OCI-LY7 (cell line): ENCODE measurements at regions of chr20 and their contacts with region 1.

Region 1: GRCh38 chr20:37384683-37385174 is 38.8 kb downstream of the SRC start:
- DNase-seq: peak; percentile 74
- H3K4me3 ChIP-seq: peak overlapping the region; percentile 53
- H3K27ac ChIP-seq: no peak overlapping the region
- H3K4me1 ChIP-seq: peaks cover 25% of the 10 kb centered on the region
- CTCF ChIP-seq: peak; percentile 83

Region 2: GRCh38 chr20:37270576-37271420 is 113.9 kb before region 1 on chr20:
- CTCF ChIA-PET with region 1: interaction called, 4 read pairs
- POLR2A ChIA-PET with region 1: no interaction called
- intact Hi-C with region 1: loop called (anchors 1 kb)
- DNase-seq: no peak
- H3K4me3 ChIP-seq: no peak overlapping the region
- H3K27ac ChIP-seq: no peak overlapping the region
- H3K4me1 ChIP-seq: peaks cover 51% of the 10 kb centered on the region
- CTCF ChIP-seq: no peak

Region 3: GRCh38 chr20:37316116-37316774 is 68.5 kb before region 1 on chr20:
- CTCF ChIA-PET with region 1: no interaction called
- POLR2A ChIA-PET with region 1: no interaction called
- intact Hi-C with region 1: loop called (anchors 5 kb)
- DNase-seq: peak; percentile 76
- H3K4me3 ChIP-seq: peak overlapping the region; percentile 40
- H3K27ac ChIP-seq: peak overlapping the region; percentile 81
- H3K4me1 ChIP-seq: peaks cover 39% of the 10 kb centered on the region
- CTCF ChIP-seq: no peak

Region 4: DNA sequence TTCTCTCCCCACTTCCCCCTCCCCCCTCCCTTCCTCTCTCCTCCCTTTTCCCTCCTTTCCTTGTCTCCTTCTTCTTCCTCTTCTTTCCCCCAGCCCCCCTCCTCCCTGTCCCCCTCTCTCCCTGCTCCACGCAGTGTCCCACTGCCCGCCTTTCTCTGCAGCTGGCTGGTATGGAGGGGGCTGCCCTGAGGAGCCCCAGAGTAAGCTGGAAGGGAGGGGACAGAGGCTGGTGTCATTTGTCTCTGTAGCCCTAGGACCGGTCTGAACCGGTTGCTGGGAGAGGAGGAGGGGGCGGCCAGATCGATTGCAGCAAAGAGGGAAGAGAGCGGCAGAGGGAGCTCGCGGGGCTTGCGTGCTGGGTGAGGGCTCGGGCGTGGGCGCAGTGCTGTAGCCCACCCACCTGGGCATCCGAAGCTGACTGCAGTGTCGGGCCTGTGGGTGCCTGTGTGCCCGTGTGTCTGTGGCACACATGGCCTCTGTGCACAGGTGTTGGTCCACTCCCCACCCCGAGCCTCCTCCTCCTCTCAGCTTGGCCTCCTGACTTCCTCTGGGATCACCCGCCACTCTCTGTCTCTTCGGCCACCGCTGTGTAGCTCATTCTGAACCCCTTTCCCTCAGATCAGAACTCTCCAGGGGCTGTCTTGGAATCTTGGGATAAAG is 11.8 kb after region 1 on chr20:
- CTCF ChIA-PET with region 1: no interaction called
- POLR2A ChIA-PET with region 1: no interaction called
- intact Hi-C with region 1: no loop called
- DNase-seq: no peak
- H3K4me3 ChIP-seq: no peak overlapping the region
- H3K27ac ChIP-seq: no peak overlapping the region
- H3K4me1 ChIP-seq: no peaks in the 10 kb centered on the region
- CTCF ChIP-seq: no peak

Region 5: GRCh38 chr20:37534401-37535157 is 149.8 kb after region 1 on chr20:
- CTCF ChIA-PET with region 1: no interaction called
- POLR2A ChIA-PET with region 1: no interaction called
- intact Hi-C with region 1: loop called (anchors 2 kb)
- DNase-seq: peak; percentile 80
- H3K4me3 ChIP-seq: no peak overlapping the region
- H3K27ac ChIP-seq: no peak overlapping the region
- H3K4me1 ChIP-seq: peaks cover 8% of the 10 kb centered on the region
- CTCF ChIP-seq: peak; percentile 94

Region 6: GRCh38 chr20:37598100-37598543 is 213.4 kb after region 1 on chr20:
- CTCF ChIA-PET with region 1: no interaction called
- POLR2A ChIA-PET with region 1: no interaction called
- intact Hi-C with region 1: no loop called
- DNase-seq: no peak
- H3K4me3 ChIP-seq: no peak overlapping the region
- H3K27ac ChIP-seq: no peak overlapping the region
- H3K4me1 ChIP-seq: no peaks in the 10 kb centered on the region
- CTCF ChIP-seq: no peak

Region 7: DNA sequence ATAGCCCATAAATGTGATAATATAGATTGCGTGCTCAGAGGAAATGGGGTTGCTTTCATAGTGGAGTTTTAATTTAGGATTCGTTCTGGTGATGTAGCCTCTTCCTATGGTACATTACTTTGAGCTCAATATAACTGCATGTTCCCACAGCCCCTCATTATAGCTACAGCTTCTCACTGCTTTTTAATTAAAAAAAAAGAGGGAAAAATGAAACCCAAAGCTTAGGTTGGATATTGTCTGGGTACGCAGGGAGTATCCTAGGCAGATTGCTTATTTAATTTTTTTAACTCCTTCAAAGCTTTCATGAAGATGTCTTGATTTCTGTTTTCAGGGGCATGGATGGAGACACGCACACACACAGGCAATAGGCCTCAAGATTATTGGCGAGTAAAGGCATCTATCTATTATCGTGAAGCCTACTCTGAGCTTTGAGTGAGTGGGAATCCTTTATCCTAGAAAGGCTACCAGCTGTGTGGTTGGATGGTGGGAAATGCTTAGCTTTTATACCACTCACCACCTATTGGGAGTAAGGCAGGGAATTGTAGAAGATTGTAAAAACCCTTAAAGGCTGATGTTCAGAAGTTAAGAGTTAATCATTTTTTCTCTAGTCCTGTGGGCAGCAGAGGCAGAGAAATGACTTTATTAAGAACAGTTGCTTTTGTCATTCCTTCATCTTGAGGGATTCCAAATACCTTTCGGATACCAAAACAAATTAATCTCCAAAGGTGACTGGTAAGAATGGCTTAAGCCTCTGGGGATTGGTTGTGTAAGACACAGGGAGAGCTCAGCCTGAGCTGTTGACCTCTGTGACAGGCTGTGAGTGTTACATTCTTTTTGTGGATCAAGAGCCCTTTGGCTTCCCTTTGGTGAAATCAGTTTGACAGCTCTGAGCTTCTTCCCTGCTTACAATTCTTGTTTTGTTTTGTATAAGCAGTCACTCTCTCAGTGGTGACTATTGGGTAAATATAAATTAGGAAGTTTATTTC is 342.5 kb after region 1 on chr20:
- CTCF ChIA-PET with region 1: interaction called, 10 read pairs
- POLR2A ChIA-PET with region 1: no interaction called
- intact Hi-C with region 1: no loop called
- DNase-seq: no peak
- H3K4me3 ChIP-seq: no peak overlapping the region
- H3K27ac ChIP-seq: no peak overlapping the region
- H3K4me1 ChIP-seq: no peaks in the 10 kb centered on the region
- CTCF ChIP-seq: no peak